ENCODE measurements at regions of chr18 and their contacts with region 1.

Region 1: GRCh38 chr18:42255908-42256765 is 301.1 kb downstream of the PIK3C3 start:
- DNase-seq: no peak
- H3K4me3 ChIP-seq: no peak overlapping the region
- H3K27ac ChIP-seq: no peak overlapping the region
- H3K4me1 ChIP-seq: no peaks in the 10 kb centered on the region
- H3K27me3 ChIP-seq: no peaks in the 10 kb centered on the region
- CTCF ChIP-seq: no peak

Region 2: GRCh38 chr18:42192251-42193248 is 63.6 kb before region 1 on chr18:
- intact Hi-C with region 1: loop called (anchors 10 kb)
- DNase-seq: no peak
- H3K4me3 ChIP-seq: no peak overlapping the region
- H3K27ac ChIP-seq: no peak overlapping the region
- H3K4me1 ChIP-seq: no peaks in the 10 kb centered on the region
- H3K27me3 ChIP-seq: no peaks in the 10 kb centered on the region
- CTCF ChIP-seq: no peak

Region 3: GRCh38 chr18:42339372-42339771 is 83.2 kb after region 1 on chr18:
- intact Hi-C with region 1: no loop called
- DNase-seq: no peak
- H3K4me3 ChIP-seq: no peak overlapping the region
- H3K27ac ChIP-seq: no peak overlapping the region
- H3K4me1 ChIP-seq: no peaks in the 10 kb centered on the region
- H3K27me3 ChIP-seq: no peaks in the 10 kb centered on the region
- CTCF ChIP-seq: no peak